H1 (cell line): ENCODE measurements at regions of chr4 and their contacts with region 1.

Region 1: GRCh38 chr4:7238300-7238960 is 46.1 kb downstream of the SORCS2 start:
- DNase-seq: peak; percentile 10 to 66
- H3K4me3 ChIP-seq: no peak overlapping the region
- H3K27ac ChIP-seq: no peak overlapping the region
- H3K4me1 ChIP-seq: no peaks in the 10 kb centered on the region
- H3K27me3 ChIP-seq: no peaks in the 10 kb centered on the region
- CTCF ChIP-seq: peak in 2 of 3 experiments; percentile 70 to 87; a peak in 3 of 4 replicates
- EP300 ChIP-seq: no peak
- POLR2A ChIP-seq: no peak
- RAD21 ChIP-seq: peak; percentile 82 to 85

Region 2: GRCh38 chr4:7108660-7109059 is 129.8 kb before region 1 on chr4:
- CTCF ChIA-PET with region 1: no interaction called
- POLR2A ChIA-PET with region 1: no interaction called
- DNase-seq: no peak
- H3K4me3 ChIP-seq: no peak overlapping the region
- H3K27ac ChIP-seq: no peak overlapping the region
- H3K4me1 ChIP-seq: peaks cover 0 to under 1% (median under 1%) of the 10 kb centered on the region in 4 experiments; a peak in 4 of 7 replicates
- H3K27me3 ChIP-seq: peaks cover 2 to 11% (median 9%) of the 10 kb centered on the region in 4 experiments
- CTCF ChIP-seq: no peak
- EP300 ChIP-seq: no peak
- POLR2A ChIP-seq: no peak
- RAD21 ChIP-seq: no peak

Region 3: DNA sequence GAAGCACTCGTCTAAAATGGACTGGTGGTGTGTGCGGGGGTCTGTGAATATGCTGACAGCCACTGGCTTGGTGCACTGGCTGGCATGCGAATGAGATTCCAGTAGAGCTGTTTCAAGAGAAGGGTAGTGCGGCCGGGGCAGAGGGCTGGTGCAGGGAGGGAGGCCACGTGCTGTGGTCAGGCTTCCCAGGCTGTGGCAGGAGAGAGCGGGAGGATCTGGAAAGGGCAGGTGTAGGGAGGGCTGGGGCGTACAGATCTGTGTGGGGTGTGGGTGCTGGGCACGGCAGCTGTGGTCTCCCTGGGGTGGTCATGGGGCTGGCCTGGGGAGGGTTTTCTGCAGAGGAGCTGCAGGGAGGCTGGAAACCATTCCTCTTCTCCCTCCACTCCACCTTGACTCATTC is 15.9 kb before region 1 on chr4:
- CTCF ChIA-PET with region 1: interaction called, 14 read pairs
- POLR2A ChIA-PET with region 1: no interaction called
- DNase-seq: no peak
- H3K4me3 ChIP-seq: no peak overlapping the region
- H3K27ac ChIP-seq: no peak overlapping the region
- H3K4me1 ChIP-seq: no peaks in the 10 kb centered on the region
- H3K27me3 ChIP-seq: no peaks in the 10 kb centered on the region
- CTCF ChIP-seq: no peak
- EP300 ChIP-seq: no peak
- POLR2A ChIP-seq: no peak
- RAD21 ChIP-seq: no peak

Region 4: DNA sequence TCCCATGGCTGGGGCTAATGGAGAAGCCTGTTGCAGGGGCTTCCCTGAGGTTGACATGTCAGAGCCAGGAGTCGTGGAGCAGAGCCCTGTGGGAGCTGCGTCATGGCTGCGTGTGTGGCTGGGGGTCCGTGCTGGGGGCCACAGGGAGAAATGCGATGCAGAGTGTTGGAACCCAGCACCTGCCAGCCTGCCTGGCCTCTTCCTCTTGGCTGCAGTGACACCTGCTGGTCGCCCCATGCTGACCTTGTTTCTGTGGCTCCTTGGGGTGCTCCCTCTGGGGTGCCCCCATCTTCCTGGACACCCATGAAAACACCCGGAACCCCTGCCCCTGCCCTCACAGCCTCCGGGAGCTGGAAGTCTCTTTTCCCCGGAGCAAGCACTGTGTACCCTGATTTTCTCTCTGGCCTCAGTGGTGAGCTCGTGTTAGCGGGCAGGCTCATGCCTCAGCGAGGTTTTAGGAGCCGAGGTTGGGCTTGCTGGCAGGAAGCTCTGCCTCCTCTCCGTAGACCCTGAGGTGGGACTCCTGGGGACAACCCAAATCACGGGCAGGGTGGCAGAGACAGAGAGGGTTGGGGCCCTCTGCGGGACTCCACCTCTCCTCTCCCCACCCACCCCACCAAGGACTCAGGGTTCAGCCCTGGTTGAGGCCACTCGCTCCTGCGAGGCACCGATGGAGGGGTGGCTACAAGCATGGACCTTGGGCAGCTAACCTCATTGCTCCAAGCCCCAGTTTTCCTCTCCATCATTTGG is 57.7 kb after region 1 on chr4:
- CTCF ChIA-PET with region 1: interaction called, 10 read pairs
- POLR2A ChIA-PET with region 1: no interaction called
- DNase-seq: peak in 1 of 2 experiments; percentile 62
- H3K4me3 ChIP-seq: no peak overlapping the region
- H3K27ac ChIP-seq: no peak overlapping the region
- H3K4me1 ChIP-seq: peaks cover 0 to 5% (median 0%) of the 10 kb centered on the region in 4 experiments; a peak in 1 of 7 replicates
- H3K27me3 ChIP-seq: no peaks in the 10 kb centered on the region
- CTCF ChIP-seq: peak in 2 of 3 experiments; percentile 52 to 57; a peak in 3 of 4 replicates
- EP300 ChIP-seq: no peak
- POLR2A ChIP-seq: no peak
- RAD21 ChIP-seq: peak; percentile 69 to 79

Region 5: GRCh38 chr4:7539659-7540058 is 301.2 kb after region 1 on chr4:
- CTCF ChIA-PET with region 1: no interaction called
- POLR2A ChIA-PET with region 1: no interaction called
- DNase-seq: no peak
- H3K4me3 ChIP-seq: no peak overlapping the region
- H3K27ac ChIP-seq: no peak overlapping the region
- H3K4me1 ChIP-seq: 0 out of 7 replicates have a peak, but pooled peaks cover 0 to 2% (median 0%) of the 10 kb centered on the region in 4 experiments
- H3K27me3 ChIP-seq: no peaks in the 10 kb centered on the region
- CTCF ChIP-seq: no peak
- EP300 ChIP-seq: no peak
- POLR2A ChIP-seq: no peak
- RAD21 ChIP-seq: no peak

Region 6: DNA sequence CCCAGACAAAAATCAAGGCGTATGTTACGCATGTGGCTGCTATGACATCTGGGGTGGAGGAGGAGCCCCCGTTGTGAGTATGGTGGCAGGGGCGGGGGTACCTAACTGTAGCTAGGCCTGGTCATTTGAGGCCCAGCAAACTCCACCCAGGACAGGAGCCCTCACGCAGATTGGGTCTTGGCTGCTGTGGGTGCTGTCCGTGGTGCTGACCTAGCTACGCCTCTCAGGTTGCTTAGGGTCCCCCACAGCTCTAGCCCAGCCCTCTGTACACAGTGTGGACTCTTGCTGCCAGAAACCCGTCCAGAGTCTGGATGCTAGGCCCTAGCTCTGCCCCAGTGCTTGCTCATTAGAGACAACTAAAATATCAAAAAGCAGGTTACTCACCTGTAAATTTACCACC is 343.0 kb after region 1 on chr4:
- CTCF ChIA-PET with region 1: no interaction called
- POLR2A ChIA-PET with region 1: no interaction called
- DNase-seq: peak; percentile 17 to 71
- H3K4me3 ChIP-seq: no peak overlapping the region
- H3K27ac ChIP-seq: no peak overlapping the region
- H3K4me1 ChIP-seq: no peaks in the 10 kb centered on the region
- H3K27me3 ChIP-seq: no peaks in the 10 kb centered on the region
- CTCF ChIP-seq: no peak
- EP300 ChIP-seq: no peak
- POLR2A ChIP-seq: no peak
- RAD21 ChIP-seq: no peak